Activated naive CD4-positive, alpha-beta T cell treated with anti-CD3 and anti-CD28 coated beads for 36 hours (primary cell): ENCODE measurements at regions of chr1 and their contacts with region 1.

Region 1: DNA sequence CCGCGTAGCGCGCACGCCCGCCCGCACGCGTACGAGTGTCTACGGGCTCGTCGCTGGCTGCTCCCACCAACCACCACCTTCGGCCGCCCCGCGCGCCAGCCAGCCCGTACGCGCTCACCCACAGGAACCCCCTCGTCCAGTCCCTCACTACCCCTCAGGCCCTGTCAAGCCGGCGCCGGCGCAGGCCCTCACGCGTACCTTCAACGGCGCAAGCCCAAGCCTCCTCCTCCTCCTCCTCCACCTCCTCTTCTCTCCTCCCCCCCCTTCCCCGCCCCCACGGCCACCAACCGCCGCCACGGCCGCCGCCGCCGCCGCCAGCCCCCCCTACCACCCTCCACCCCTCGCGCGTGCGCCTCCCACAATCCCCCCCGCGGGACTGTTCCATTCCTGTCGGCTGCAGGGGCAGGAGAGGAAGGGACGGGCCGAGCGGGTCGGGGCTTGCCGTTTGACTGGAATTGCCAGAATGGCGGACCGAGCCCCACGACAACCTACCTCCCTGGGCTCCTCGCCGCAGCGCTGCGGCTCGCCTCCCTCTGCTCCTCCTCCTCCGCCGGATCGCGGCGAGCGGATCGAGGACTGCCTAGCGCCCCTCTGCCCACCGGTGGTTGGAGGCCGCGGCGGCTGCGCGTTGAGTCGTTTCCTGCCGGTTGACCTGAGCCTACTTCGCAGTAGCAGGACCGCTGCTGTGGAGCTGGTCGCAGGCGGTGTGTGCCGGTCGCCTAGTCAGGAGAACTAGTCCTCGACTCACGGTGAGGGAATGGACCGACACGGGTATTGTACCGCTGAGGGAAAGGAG is at the start of gene ASH1L:
- DNase-seq: peak; percentile 95
- H3K4me3 Mint-ChIP-seq: peak within 1 kb of the TSS; percentile 100
- H3K27ac Mint-ChIP-seq: peak within 1 kb of the TSS; percentile 97
- H3K4me1 Mint-ChIP-seq: peaks cover 48% of the 10 kb centered on the region
- H3K27me3 Mint-ChIP-seq: no peaks in the 10 kb centered on the region
- total RNA-seq, gene ASH1L: 27.4 to 27.5 TPM

Region 2: DNA sequence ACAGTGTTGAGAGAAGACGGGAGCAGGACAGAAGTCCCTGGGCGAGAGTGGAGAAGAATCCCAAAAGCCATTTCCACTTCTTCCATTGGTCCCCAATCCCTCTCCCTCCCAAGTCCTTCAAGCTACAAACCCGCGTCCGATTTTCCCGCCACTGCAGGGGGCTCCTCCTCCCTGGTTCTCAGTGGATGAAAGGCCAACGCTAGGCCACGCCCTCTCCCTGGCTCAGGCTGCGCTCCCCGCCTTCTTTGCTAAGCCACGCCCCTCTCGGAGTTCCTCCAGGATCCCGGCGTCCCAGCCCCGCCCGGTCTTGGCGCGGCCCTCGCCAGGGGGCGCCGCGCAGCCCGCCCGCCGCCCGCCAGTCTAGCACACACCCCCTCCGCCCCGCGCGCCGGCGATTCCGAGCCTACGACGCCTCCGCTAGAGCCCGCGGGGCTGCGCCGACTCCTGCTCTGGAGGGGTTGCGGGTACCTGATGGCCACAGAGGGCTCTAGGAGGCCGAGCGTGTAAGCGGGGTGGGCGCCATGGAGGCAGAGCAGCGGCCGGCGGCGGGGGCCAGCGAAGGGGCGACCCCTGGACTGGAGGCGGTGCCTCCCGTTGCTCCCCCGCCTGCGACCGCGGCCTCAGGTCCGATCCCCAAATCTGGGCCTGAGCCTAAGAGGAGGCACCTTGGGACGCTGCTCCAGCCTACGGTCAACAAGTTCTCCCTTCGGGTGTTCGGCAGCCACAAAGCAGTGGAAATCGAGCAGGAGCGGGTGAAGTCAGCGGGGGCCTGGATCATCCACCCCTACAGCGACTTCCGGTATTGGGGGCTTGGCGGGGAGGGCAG is 285.5 kb before region 1 on chr1 and contains the start of gene HCN3:
- CTCF ChIA-PET with region 1: interaction called, 3 read pairs
- intact Hi-C with region 1: loop called (anchors 10 kb)
- DNase-seq: peak; percentile 96
- H3K4me3 Mint-ChIP-seq: peak within 1 kb of the TSS; percentile 62
- H3K27ac Mint-ChIP-seq: no peak within 1 kb of the TSS
- H3K4me1 Mint-ChIP-seq: peaks cover 30% of the 10 kb centered on the region
- H3K27me3 Mint-ChIP-seq: no peaks in the 10 kb centered on the region
- total RNA-seq, gene HCN3: 0.79 to 1.6 TPM

Region 3: GRCh38 chr1:155379631-155380090 is 183.1 kb before region 1 on chr1:
- CTCF ChIA-PET with region 1: no interaction called
- intact Hi-C with region 1: loop called (anchors 5 kb)
- DNase-seq: no peak
- H3K4me3 Mint-ChIP-seq: no peak overlapping the region
- H3K27ac Mint-ChIP-seq: no peak overlapping the region
- H3K4me1 Mint-ChIP-seq: peaks cover 8% of the 10 kb centered on the region
- H3K27me3 Mint-ChIP-seq: no peaks in the 10 kb centered on the region

Region 4: GRCh38 chr1:155513300-155513916 is 49.4 kb before region 1 on chr1:
- CTCF ChIA-PET with region 1: no interaction called
- intact Hi-C with region 1: loop called (anchors 10 kb)
- DNase-seq: no peak
- H3K4me3 Mint-ChIP-seq: no peak overlapping the region
- H3K27ac Mint-ChIP-seq: no peak overlapping the region
- H3K4me1 Mint-ChIP-seq: peaks cover 55% of the 10 kb centered on the region
- H3K27me3 Mint-ChIP-seq: no peaks in the 10 kb centered on the region